Transverse colon (tissue), 4 donors: ENCODE measurements at regions of chrX and their contacts with region 1.

Region 1: GRCh38 chrX:107776649-107777535 is 641 bp upstream of the NCBP2L start:
- DNase-seq: peak; percentile 80
- H3K4me3 ChIP-seq: peak overlapping the region in 3 of 4 donors; percentile 46 to 62 (median 50)
- H3K27ac ChIP-seq: peak overlapping the region; percentile 77 to 88 (median 83)
- H3K4me1 ChIP-seq: peaks cover 0 to 18% (median 0%) of the 10 kb centered on the region in 4 donors
- H3K27me3 ChIP-seq: no peaks in the 10 kb centered on the region
- CTCF ChIP-seq: peak; percentile 56 to 77 (median 75)
- EP300 ChIP-seq: no peak
- POLR2A ChIP-seq: no peak

Region 2: DNA sequence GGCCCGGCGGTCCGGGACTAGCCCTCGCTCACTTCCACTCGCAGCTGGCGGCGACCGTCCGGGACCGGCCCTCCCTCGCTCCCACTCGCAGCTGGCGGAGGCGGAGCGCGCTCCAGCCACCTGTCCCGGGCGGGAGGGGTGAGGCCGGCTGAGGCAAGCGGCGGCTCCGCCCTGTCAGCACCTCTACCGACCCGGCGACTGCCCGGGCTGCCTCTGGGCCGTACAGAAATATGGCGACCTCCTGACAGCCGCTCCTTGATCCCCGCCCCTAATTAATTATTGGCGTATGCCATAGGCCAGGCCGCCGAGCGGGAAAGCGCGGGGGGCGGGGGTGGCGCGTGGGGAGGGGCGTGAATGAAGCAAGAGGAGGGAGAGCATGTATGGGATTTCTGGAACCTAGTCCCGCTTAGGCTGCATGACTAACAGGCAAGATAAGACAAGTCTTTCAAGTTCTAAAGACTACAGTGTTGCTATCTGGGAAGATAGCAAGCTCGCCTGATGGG is 776.8 kb before region 1 on chrX and contains the start of gene MORC4:
- in situ Hi-C with region 1: loop called in 1 of 4 experiments (anchors 25 kb)
- intact Hi-C with region 1: no loop called
- DNase-seq: peak; percentile 78
- H3K4me3 ChIP-seq: peak within 1 kb of the TSS; percentile 45 to 62 (median 58)
- H3K27ac ChIP-seq: peak within 1 kb of the TSS; percentile 64 to 83 (median 76)
- H3K4me1 ChIP-seq: no peaks in the 10 kb centered on the region
- H3K27me3 ChIP-seq: no peaks in the 10 kb centered on the region
- CTCF ChIP-seq: no peak
- EP300 ChIP-seq: no peak
- POLR2A ChIP-seq: peak; percentile 27
- total RNA-seq, gene MORC4: 6.3 to 19.1 (median 8.9) TPM

Region 3: DNA sequence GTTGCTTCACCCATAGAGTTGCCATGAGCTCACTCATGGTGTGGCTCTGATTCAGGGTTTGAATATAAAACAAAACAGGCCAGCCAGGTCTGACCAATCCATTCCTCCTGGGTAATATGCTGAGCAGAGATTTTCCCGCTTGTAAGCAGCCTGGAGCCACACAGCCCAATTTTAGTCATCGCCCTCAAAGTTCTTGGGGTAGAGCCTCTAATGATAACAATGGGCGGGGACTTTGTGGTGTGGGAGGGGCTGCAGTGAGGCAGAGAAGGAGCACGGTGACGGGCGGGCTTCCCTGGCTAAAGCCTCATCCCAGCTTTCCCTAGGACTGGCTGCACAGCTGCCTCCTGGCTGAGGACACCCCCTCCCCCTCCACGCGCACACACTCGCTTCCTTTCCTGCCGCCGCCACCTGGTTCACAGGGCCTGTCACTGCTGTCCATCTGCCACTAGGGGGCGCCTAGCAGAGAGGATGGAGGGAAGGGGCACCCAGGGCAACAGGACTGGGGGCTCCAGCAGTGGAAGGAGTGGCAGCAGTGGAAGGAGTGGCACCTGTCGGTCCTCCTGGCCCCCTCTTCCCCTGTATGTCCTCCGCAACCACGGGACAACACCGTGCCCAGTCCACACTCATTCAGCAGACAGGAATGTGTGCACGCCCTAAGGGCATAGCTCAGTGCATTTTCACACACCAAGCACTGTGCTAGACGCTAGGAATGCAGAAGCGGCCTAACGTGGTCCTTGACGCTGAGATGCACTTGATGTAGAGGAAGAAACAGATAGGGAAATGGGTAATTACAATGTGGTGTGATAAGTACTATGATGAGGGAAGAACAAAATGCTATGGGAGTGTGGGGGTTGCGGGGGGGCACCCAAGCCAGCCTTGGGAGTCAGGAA is 121.8 kb before region 1 on chrX:
- in situ Hi-C with region 1: loop called (anchors 5 to 25 kb)
- intact Hi-C with region 1: loop called (anchors 5 kb)
- DNase-seq: peak; percentile 59
- H3K4me3 ChIP-seq: no peak overlapping the region
- H3K27ac ChIP-seq: peak overlapping the region in 3 of 4 donors; percentile 12 to 41 (median 16)
- H3K4me1 ChIP-seq: no peaks in the 10 kb centered on the region
- H3K27me3 ChIP-seq: no peaks in the 10 kb centered on the region
- CTCF ChIP-seq: peak; percentile 57 to 71 (median 60)
- EP300 ChIP-seq: no peak
- POLR2A ChIP-seq: no peak

Region 4: GRCh38 chrX:107672955-107673378 is 103.9 kb before region 1 on chrX:
- in situ Hi-C with region 1: loop called in 3 of 4 experiments (anchors 10 to 25 kb)
- intact Hi-C with region 1: loop called (anchors 2 kb)
- DNase-seq: peak; percentile 87
- H3K4me3 ChIP-seq: no peak overlapping the region
- H3K27ac ChIP-seq: peak overlapping the region; percentile 88 to 96 (median 92)
- H3K4me1 ChIP-seq: peaks cover 4 to 24% (median 11%) of the 10 kb centered on the region in 4 donors
- H3K27me3 ChIP-seq: no peaks in the 10 kb centered on the region
- CTCF ChIP-seq: peak; percentile 60 to 85 (median 66)
- EP300 ChIP-seq: no peak
- POLR2A ChIP-seq: peak; percentile 34

Region 5: DNA sequence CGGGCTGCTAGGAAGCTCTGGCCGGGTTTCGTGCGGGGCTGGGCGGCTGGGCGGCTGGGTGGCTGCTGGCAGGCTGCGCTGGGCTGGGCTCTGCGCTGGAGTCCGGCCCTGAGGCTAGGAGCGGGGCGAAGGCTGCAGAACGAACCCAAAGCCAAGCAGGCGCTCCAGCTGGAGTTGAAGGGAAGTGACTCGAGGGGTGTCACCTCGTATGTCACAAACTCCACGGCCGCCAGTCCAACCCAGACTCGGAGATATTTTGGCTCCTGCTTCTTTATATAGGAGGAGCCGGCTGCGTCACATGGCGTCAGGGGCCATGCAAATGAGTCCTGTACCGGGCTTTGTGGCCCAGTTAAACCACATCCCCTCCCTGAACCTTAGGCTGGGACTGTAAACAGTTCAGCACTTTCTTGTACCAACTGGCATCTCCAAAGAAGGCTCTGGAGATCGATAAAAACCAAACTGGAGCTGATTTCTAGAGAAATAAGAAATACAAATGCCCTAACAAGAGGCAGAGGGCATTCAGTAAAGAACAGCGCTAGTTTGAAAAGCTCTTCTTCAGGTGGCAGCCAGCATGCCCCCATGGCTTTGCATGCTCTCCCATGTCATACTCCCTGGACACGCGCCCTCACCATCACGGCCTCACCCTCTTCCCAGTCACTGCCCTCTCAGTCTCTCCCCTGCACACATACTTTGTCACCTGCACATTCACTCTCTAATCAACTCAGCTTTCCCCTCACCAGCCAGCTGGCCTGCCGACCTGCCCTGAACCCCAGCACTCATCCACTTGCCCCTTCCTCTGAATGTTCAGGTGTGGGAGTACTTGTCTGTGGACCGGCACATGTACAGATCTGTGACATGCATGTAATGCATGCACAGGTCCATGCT is 59.8 kb before region 1 on chrX:
- in situ Hi-C with region 1: no loop called
- intact Hi-C with region 1: loop called (anchors 5 kb)
- DNase-seq: peak; percentile 90
- H3K4me3 ChIP-seq: peak overlapping the region; percentile 65 to 86 (median 78)
- H3K27ac ChIP-seq: peak overlapping the region; percentile 92 to 96 (median 95)
- H3K4me1 ChIP-seq: peaks cover 0 to 16% (median 4%) of the 10 kb centered on the region in 4 donors
- H3K27me3 ChIP-seq: no peaks in the 10 kb centered on the region
- CTCF ChIP-seq: peak in 1 of 5 experiments; percentile 12
- EP300 ChIP-seq: peak; percentile 70
- POLR2A ChIP-seq: peak; percentile 97